PC-3 (cell line): ENCODE measurements at regions of chr3 and their contacts with region 1.

Region 1: DNA sequence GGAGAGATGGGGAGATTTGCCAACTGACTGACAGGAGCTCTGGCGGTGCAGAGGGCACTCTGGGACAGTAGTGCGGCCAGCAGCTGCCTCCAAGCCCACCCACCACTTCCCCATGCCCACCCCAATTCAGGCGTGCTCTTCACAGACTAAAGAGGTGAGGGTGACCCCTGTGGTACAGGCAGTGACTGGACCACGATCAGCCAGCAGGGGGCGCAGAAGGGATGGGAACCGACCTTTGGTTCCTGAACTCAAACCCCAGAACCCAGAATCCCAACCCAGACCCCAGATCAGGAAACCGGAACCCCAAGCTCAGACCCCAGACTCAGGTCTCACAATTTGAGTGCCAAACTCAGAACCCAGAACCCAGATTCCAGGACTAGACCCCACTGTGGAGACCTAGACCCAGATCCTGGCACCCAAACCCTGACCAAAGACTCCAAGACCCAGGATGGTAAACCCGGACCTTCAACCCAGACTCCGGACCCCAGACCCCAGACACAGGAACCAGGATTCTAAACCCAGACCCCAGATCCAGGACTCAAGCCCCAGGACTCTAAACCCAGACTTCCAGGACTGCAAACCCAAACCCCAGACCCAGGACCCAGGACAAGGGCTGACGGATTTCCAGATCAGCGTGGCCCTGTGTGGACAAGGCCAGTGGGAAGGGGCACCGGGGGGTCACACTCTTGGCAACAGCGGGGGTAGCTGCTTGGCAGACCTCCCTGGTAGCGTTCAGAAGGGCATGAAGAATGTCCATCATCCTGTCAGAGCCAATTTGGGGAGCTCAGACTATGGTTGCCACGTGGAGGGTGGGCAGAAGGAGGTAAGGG is 3.7 kb upstream of the MYL3 start:
- DNase-seq: peak; percentile 74
- ATAC-seq: peak; percentile 70
- H3K4me3 ChIP-seq: no peak overlapping the region
- H3K27ac ChIP-seq: no peak overlapping the region
- H3K4me1 ChIP-seq: no peaks in the 10 kb centered on the region
- H3K27me3 ChIP-seq: no peaks in the 10 kb centered on the region
- CTCF ChIP-seq: peak; percentile 94

Region 2: GRCh38 chr3:46848271-46849044 is 18.5 kb before region 1 on chr3:
- CTCF ChIA-PET with region 1: no interaction called
- POLR2A ChIA-PET with region 1: no interaction called
- intact Hi-C with region 1: no loop called
- DNase-seq: peak; percentile 28
- ATAC-seq: no peak
- H3K4me3 ChIP-seq: no peak overlapping the region
- H3K27ac ChIP-seq: no peak overlapping the region
- H3K4me1 ChIP-seq: peaks cover 13% of the 10 kb centered on the region
- H3K27me3 ChIP-seq: no peaks in the 10 kb centered on the region
- CTCF ChIP-seq: peak; percentile 65

Region 3: DNA sequence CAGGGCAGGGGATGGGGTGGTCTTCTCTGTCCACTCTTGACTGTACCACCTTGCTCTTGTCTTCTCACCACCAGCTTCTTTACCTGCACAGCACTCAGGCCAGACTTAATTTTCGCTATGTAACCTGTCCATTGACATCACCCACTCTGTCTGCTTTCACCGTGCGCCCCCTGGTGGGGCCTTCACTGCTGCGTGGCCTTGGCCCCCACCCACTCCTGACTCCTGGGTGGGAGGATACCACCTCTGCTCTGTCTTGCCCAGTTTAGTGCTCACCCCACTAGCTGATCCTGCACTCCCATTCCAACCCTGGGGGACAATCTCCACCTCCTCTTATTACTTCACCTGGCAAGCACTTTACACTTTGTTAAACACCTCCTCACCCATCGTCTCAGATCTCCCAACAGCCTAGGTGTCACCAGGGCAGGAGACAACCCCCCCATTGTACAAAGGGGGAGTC is 28.3 kb after region 1 on chr3:
- CTCF ChIA-PET with region 1: no interaction called
- POLR2A ChIA-PET with region 1: no interaction called
- intact Hi-C with region 1: loop called (anchors 2 kb)
- DNase-seq: peak; percentile 77
- ATAC-seq: peak; percentile 72
- H3K4me3 ChIP-seq: no peak overlapping the region
- H3K27ac ChIP-seq: no peak overlapping the region
- H3K4me1 ChIP-seq: peaks cover 4% of the 10 kb centered on the region; the same call in 1 of the 2 replicates
- H3K27me3 ChIP-seq: no peaks in the 10 kb centered on the region
- CTCF ChIP-seq: peak; percentile 97

Region 4: DNA sequence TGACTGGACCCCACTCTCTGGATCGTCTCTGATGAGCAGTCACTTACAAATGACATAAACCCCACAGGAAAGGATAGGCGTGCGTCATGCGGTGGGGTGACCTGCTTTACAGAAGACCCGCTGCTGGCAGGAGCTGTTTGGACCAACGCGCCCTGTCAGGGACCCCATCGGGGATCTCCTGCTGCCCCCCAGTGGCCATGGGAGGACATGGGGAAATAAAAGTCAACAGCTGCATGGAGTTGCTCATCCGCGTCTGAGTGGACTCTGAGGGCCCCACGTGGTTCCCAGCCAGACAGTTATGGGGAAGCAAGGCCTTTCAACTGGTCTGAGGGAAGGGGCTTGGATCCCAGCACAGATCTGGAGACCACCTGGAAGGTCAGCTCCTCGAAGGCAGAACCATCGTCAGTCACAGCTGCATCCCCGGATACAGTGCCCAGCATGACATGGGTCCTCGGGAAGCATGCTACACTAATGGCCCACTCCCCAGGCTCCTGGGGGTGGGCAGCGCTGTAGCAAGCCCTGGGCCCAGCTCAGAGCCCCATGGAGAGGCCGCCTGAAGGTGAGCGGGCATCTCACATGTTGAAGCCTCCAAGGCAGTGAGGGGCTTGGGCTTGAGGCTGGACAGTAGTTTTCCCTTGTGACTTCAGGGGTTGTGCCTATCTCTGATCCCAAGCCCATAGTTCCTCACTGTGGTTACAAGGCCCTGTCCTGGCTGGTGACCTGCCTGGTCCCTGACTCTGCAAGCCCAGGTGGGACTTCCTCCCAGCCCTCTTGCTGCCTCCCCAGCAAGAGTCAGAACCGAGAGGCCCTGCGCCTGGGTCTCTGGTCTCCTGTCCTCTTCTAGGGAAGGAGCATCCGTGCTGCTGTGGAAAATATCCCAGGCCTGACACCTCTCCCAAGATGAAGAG is 42.9 kb after region 1 on chr3:
- CTCF ChIA-PET with region 1: no interaction called
- POLR2A ChIA-PET with region 1: no interaction called
- intact Hi-C with region 1: loop called (anchors 1 kb)
- DNase-seq: peak; percentile 87
- ATAC-seq: peak; percentile 83
- H3K4me3 ChIP-seq: no peak overlapping the region
- H3K27ac ChIP-seq: no peak overlapping the region
- H3K4me1 ChIP-seq: peaks cover 5% of the 10 kb centered on the region; the same call in 1 of the 2 replicates
- H3K27me3 ChIP-seq: no peaks in the 10 kb centered on the region
- CTCF ChIP-seq: peak; percentile 92